ENCODE measurements at regions of chr19 and their contacts with region 1.

Region 1: DNA sequence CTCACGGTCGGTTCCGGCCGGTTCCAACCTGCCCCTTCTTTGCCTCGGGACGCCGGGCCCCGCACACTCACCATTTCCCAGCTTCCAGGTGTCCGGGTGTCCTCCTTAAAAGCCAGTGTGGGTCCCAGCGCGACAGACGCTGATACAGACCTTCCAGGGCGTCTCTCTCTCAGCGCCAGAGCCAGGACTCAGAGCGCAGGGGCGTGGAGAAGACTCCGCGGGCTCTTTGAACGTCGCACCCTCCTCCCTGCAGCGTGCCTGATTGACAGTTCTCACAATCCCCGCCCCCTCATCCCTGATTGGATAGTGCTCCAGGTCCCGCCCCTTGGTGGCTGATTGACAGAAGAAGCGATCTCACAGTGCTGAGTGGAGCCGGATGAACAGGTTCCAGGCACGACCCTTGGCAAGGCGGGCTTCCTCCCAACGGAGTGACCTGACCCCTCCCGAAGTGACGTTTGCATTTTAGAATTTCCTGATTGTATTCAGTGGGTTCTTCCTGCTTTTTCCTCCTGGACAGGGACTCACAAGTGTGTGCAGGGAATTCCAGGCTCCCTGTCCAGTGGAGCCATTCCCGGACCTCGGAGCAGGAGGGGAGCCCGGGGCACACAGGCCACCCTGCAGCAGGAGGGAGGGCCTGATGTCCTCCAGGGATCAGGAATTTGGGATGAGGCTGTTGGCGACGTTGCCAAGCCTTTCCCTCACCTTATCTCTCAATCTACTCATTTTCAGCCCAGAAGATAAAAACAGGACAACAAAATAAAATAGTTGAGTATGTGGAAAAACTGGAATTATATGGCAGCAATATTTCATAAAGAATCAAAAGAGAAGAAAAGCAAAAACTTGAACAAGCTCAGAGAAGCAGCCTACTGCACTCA is at the start of gene ZNF823:
- DNase-seq: peak; percentile 99
- H3K4me3 ChIP-seq: peak within 1 kb of the TSS; percentile 75
- H3K4me3 Mint-ChIP-seq: peak within 1 kb of the TSS; percentile 100
- H3K27ac Mint-ChIP-seq: peak within 1 kb of the TSS; percentile 99
- H3K4me1 ChIP-seq: peaks cover 9% of the 10 kb centered on the region
- H3K4me1 Mint-ChIP-seq: peaks cover 5% of the 10 kb centered on the region
- H3K27me3 ChIP-seq: no peaks in the 10 kb centered on the region
- H3K27me3 Mint-ChIP-seq: no peaks in the 10 kb centered on the region
- CTCF ChIP-seq: no peak
- total RNA-seq, gene ZNF823: 11.9 and 12.1 TPM in 2 replicates

Region 2: DNA sequence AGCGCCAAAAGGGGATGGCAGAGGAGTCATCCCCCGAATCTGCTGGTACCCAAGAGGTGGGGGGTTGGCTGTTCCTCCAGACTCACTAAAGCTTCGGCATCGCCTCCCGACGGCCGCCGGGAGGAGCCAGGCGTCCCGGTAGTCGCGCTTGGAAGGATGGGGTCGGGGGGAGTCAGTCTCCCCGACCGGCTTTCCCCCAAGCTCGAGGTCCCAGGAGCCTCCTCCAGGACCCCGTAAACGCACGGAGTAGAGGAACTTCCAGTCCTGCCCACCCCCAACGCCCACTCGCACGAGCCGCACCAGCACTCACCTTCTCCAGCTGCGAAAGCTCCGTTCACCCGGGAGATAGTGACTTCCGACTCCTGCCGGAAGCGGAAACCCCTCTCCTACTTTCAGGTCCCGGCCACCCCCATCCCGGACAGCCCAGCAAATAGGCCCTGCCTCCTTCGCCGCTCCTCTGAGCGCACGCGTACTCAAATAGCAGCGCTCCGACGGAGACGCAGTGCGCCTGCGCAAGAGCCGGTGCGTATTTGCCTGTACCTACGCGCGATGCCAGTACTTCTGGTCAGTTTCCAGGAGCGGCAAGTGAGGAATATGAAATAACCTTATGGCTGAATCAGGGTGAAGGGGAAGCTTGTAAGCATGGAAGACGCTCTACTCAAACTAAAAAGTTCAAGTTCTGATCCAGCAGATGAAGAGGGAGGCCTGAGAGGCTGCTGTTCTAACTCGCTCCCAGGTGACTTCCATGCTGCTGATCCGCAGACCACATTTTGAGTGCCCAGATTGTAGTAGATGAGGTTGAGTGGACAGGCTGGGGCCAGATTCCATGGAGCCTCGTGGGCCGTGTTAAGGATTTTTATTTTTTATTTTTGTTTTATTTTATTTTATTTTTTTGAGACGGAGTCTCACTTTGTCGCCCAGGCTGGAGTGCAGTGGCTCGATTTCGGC is 179.8 kb before region 1 on chr19 and contains the start of gene ELOF1:
- CTCF ChIA-PET with region 1: no interaction called
- POLR2A ChIA-PET with region 1: no interaction called
- intact Hi-C with region 1: loop called (anchors 5 kb)
- DNase-seq: peak; percentile 96 to 97
- H3K4me3 ChIP-seq: peak within 1 kb of the TSS; percentile 73
- H3K4me3 Mint-ChIP-seq: peak within 1 kb of the TSS; percentile 90
- H3K27ac Mint-ChIP-seq: peak within 1 kb of the TSS; percentile 90
- H3K4me1 ChIP-seq: 0 out of 2 replicates have a peak, but pooled peaks cover 5% of the 10 kb centered on the region
- H3K4me1 Mint-ChIP-seq: peaks cover 13% of the 10 kb centered on the region
- H3K27me3 ChIP-seq: no peaks in the 10 kb centered on the region
- H3K27me3 Mint-ChIP-seq: no peaks in the 10 kb centered on the region
- CTCF ChIP-seq: peak in 1 of 2 experiments; percentile 39
- total RNA-seq, gene ELOF1: 48.5 and 49.4 TPM in 2 replicates

Region 3: GRCh38 chr19:11694533-11695439 is 44.2 kb before region 1 on chr19:
- CTCF ChIA-PET with region 1: interaction called, 3 read pairs
- POLR2A ChIA-PET with region 1: no interaction called
- intact Hi-C with region 1: loop called (anchors 1 kb)
- DNase-seq: peak; percentile 96
- H3K4me3 ChIP-seq: peak overlapping the region; percentile 90
- H3K4me3 Mint-ChIP-seq: peak overlapping the region; percentile 99
- H3K27ac Mint-ChIP-seq: peak overlapping the region; percentile 100
- H3K4me1 ChIP-seq: peaks cover 15% of the 10 kb centered on the region
- H3K4me1 Mint-ChIP-seq: peaks cover 6% of the 10 kb centered on the region
- H3K27me3 ChIP-seq: no peaks in the 10 kb centered on the region
- H3K27me3 Mint-ChIP-seq: no peaks in the 10 kb centered on the region
- CTCF ChIP-seq: no peak

Region 4: GRCh38 chr19:11766597-11767591 is 27.9 kb after region 1 on chr19 and contains the start of gene ZNF441:
- CTCF ChIA-PET with region 1: interaction called, 3 read pairs
- POLR2A ChIA-PET with region 1: interaction called, 9 read pairs
- intact Hi-C with region 1: loop called (anchors 1 kb)
- DNase-seq: peak; percentile 97
- H3K4me3 ChIP-seq: peak within 1 kb of the TSS; percentile 72
- H3K4me3 Mint-ChIP-seq: peak within 1 kb of the TSS; percentile 93
- H3K27ac Mint-ChIP-seq: peak within 1 kb of the TSS; percentile 97
- H3K4me1 ChIP-seq: peaks cover 11% of the 10 kb centered on the region
- H3K4me1 Mint-ChIP-seq: peaks cover 5% of the 10 kb centered on the region
- H3K27me3 ChIP-seq: no peaks in the 10 kb centered on the region
- H3K27me3 Mint-ChIP-seq: no peaks in the 10 kb centered on the region
- CTCF ChIP-seq: no peak
- total RNA-seq, gene ZNF441: 3.2 and 4.4 TPM in 2 replicates

Measured in Caco-2 (cell line).